PC-9 (cell line): ENCODE measurements at regions of chr15 and their contacts with region 1.

Region 1: DNA sequence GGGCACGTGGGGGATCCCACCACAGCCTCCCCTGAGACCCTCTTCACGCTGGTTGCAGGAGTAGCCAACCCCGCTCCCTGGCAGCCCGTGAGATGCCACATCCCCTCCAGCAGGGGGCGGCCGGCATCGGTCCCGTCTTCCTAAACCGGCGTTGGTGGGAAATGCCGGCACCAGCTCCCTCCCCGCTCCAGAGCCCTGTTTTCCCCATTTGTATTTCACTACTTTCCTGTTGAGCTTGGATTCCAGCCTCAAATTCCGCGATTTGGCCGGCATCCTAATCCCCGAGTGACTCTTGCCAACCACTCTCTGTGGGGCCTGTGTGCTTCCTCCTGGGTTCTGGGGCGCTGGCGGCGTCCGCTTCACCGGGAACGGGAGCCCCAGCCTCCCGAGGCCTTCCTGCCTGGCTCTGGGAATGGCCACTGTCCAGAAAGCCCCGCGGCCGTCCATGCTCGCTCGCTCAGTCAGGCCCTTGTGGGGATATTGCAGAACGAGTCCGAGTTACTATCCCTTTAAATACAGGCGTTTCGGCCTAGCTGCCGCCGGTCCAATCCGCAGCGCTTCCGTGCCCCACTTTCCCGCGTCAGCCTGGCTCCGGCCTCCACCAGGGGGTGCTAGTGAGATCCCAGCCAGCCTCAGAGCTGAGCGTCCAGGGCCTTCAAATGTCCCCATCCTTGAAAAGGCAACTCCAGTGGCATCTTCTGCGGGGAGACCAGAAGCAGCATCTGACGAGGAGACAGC is 8.1 kb upstream of the ADAMTS17 start:
- DNase-seq: peak; percentile 65 to 95
- H3K4me3 ChIP-seq: peak overlapping the region; percentile 63; the same call in 1 of the 2 replicates
- H3K27ac ChIP-seq: peak overlapping the region; percentile 51; the same call in 1 of the 2 replicates
- H3K4me1 ChIP-seq: 0 out of 2 replicates have a peak, but pooled peaks cover 12% of the 10 kb centered on the region
- H3K27me3 ChIP-seq: peaks cover 6% of the 10 kb centered on the region; the same call in 1 of the 2 replicates
- CTCF ChIP-seq: peak; percentile 76

Region 2: GRCh38 chr15:100383302-100384107 is 33.6 kb after region 1 on chr15:
- CTCF ChIA-PET with region 1: no interaction called
- POLR2A ChIA-PET with region 1: no interaction called
- intact Hi-C with region 1: loop called (anchors 1 kb)
- DNase-seq: peak; percentile 27 to 39
- H3K4me3 ChIP-seq: no peak overlapping the region
- H3K27ac ChIP-seq: no peak overlapping the region
- H3K4me1 ChIP-seq: no peaks in the 10 kb centered on the region
- H3K27me3 ChIP-seq: peaks cover 51% of the 10 kb centered on the region
- CTCF ChIP-seq: peak; percentile 77

Region 3: DNA sequence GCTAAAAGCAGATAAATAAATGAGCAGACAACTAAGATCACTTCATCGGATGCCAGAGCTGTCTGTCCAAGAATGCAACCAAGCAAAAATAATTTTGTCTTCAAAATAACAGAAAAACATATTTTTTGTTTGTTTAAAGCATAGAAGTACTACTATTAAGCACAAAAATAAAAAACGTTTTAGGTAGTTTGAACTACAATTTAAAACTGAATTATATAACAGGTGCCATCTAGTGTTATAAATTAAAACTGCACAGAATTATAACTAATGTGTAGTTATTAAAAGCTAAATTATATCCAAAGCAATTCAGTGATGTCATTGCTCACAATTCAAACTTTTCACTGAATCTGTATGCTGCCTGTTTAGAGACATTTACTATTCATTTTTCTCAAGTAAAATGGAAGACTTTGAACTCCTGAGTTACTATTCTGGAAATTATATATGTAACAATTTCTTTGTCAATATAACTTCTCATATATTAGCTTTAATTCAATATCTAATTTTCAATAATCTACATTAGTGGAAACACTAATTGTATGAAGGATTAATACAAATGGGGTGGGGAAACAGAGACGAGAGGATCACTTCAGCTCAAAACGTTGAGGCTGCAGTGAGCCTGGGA is 222.6 kb after region 1 on chr15:
- CTCF ChIA-PET with region 1: interaction called, 5 read pairs
- POLR2A ChIA-PET with region 1: no interaction called
- intact Hi-C with region 1: loop called (anchors 5 kb)
- DNase-seq: no peak
- H3K4me3 ChIP-seq: no peak overlapping the region
- H3K27ac ChIP-seq: no peak overlapping the region
- H3K4me1 ChIP-seq: no peaks in the 10 kb centered on the region
- H3K27me3 ChIP-seq: no peaks in the 10 kb centered on the region
- CTCF ChIP-seq: peak; percentile 75

Region 4: DNA sequence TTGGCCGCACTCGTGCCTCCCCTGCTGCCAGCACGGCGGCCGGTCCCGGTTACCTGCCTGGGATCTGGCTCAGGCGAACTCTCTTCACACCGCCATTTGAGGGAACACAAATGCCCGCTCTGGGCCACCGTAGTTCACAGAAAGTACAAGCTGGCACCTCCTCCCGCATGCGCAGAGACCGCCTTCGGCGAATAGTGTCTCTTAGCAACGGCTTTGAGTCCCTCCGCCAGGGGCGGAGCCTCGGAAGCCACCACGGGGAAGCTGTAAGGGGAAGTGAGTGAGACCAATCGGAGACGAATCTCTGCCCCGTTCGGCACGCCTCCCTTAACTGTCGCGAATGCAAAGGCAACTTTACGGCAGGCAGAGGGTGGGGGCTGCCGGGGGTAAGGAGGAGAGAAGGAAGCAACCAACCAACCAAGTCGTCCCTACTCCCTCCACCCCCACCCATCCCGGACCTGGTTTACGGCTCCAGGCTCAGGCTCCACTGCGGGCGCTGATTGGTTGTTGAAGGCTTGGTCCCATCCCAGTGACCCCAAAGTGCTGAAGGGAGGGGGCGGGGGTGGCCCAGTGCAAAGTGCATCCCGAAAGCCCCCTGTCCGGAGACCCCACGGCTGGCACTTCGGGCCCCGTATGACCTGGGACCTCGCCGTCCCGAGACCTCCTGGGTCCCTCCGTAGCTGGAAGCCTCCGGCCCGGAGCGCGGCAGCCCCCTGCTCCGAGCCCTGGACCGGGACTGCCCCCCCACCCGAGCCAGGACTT is 252.4 kb after region 1 on chr15 and contains the starts of genes ASB7 and LINS1:
- CTCF ChIA-PET with region 1: interaction called, 5 read pairs
- POLR2A ChIA-PET with region 1: no interaction called
- intact Hi-C with region 1: loop called (anchors 1 kb)
- DNase-seq: peak; percentile 99
- H3K4me3 ChIP-seq: peak within 1 kb of the TSS; percentile 86
- H3K27ac ChIP-seq: peak within 1 kb of the TSS; percentile 26
- H3K4me1 ChIP-seq: peaks cover 20% of the 10 kb centered on the region
- H3K27me3 ChIP-seq: no peaks in the 10 kb centered on the region
- CTCF ChIP-seq: no peak
- total RNA-seq, gene ASB7: 17.9 and 19.0 TPM in 2 replicates
- total RNA-seq, gene LINS1: 7.0 and 10.9 TPM in 2 replicates